Activated T-helper 1 cell treated with anti-CD3 and anti-CD28 coated beads, Interleukin-12 subunit alpha, Interleukin-12 subunit beta, Interleukin-2, Interleukin-4 antibody, amounts not matched to agents 30 ng/mL and 10 ng/mL and 1 ng/mL, durations not matched to agents 14 hours and 24 hours and 36 hours (primary cell): ENCODE measurements at regions of chr10 and their contacts with region 1.

Region 1: DNA sequence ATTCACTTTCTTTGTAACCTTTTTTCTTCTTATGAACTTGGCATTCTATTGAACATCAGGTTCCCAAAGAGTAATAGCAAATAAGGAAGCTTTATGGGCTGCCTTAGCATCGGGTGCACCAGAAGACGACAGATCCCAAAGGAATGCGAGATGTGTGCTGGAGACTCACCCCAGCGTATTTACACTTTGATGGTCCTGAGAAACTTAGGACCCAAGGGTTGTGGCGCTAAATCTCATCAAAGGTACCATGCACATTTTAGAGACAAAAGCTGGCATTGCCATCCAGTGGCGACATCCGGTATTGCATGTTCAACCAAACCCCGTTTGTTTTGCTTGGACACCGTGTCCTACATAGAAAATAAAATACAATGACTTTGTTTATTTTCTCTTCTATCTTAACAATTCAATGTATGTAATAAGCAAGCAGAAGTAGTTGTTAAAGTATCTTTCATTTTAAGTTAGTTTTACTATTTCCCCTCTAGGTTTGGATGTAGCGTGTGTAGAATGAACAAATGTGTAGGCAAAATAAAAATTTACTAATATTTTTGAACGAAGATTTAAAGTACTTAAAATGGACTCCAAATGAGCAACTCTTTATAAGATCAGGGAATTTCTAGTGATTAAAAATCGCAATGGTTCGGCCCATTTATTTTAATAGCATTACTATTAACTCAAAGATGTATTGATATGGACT is 1154.8 kb downstream of the GATA3 start:
- DNase-seq: peak; percentile 48
- H3K4me3 Mint-ChIP-seq: no peak overlapping the region
- H3K27ac Mint-ChIP-seq: no peak overlapping the region
- H3K4me1 Mint-ChIP-seq: no peaks in the 10 kb centered on the region
- H3K27me3 Mint-ChIP-seq: peaks cover 17% of the 10 kb centered on the region

Region 2: DNA sequence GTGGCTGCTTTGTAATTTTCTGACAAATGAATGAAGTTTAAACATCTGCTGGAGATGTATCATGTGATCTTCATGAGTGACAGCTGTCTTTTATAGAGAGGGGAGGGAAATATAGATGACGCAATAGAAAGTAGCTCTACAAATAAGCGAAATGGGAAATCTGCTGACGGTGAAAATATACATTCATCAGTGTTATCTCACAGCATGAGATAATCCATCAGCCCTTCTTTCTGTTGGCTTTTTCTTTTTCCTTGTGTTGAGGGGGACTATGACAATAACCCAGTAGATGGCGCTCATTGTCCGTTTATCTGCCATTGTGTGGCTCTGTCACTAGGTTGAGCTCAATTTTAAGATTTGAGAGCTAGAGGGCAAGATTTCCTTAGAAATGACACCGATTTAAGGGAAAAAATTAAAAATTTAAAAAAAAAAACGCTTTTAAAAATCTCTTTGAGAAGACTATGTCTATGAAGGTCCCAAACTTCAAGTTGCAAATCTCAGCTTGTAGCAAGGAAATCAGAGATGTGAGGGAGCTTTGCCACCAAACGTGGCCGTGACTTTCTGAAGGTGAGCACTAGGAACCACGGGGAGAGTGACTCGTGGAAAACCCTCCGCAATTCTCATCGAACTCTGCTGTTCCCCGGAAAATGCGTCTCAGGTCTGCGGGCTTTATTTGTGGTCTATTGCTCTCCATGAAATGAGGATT is 1683.8 kb before region 1 on chr10:
- intact Hi-C with region 1: loop called (anchors 10 kb)
- DNase-seq: peak; percentile 56
- H3K4me3 Mint-ChIP-seq: no peak overlapping the region
- H3K27ac Mint-ChIP-seq: peak overlapping the region; percentile 6
- H3K4me1 Mint-ChIP-seq: peaks cover 15% of the 10 kb centered on the region
- H3K27me3 Mint-ChIP-seq: peaks cover 13% of the 10 kb centered on the region

Region 3: GRCh38 chr10:7818295-7819122 is 1390.7 kb before region 1 on chr10 and contains the start of gene TAF3:
- intact Hi-C with region 1: loop called (anchors 2 kb)
- DNase-seq: peak; percentile 92
- H3K4me3 Mint-ChIP-seq: peak within 1 kb of the TSS; percentile 97
- H3K27ac Mint-ChIP-seq: peak within 1 kb of the TSS; percentile 91
- H3K4me1 Mint-ChIP-seq: peaks cover 21% of the 10 kb centered on the region
- H3K27me3 Mint-ChIP-seq: peaks cover 20% of the 10 kb centered on the region
- total RNA-seq, gene TAF3: 15.1 and 16.3 TPM in 2 replicates

Region 4: DNA sequence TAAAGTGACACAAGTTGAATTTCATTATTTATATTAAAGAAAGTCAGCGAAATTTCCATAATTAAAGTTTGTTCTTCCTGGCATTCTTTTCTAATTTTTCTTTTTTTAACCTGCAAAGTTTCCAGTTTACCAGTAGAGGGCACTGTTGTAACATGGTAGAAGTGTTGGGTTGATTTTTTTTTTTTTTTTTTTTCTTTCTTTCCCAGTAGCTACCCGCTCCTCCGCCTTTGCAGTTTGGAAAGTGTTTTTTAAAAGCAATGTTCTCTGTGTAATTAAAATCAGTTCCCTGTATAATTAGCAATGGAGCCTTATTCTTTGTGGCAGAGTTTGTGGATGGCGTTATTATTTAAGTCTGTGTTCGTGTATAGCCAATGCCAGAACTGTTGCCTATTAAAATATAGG is 1337.2 kb before region 1 on chr10:
- intact Hi-C with region 1: loop called (anchors 1 kb)
- DNase-seq: no peak
- H3K4me3 Mint-ChIP-seq: peak overlapping the region; percentile 53
- H3K27ac Mint-ChIP-seq: no peak overlapping the region
- H3K4me1 Mint-ChIP-seq: no peaks in the 10 kb centered on the region
- H3K27me3 Mint-ChIP-seq: peaks cover 4% of the 10 kb centered on the region

Region 5: DNA sequence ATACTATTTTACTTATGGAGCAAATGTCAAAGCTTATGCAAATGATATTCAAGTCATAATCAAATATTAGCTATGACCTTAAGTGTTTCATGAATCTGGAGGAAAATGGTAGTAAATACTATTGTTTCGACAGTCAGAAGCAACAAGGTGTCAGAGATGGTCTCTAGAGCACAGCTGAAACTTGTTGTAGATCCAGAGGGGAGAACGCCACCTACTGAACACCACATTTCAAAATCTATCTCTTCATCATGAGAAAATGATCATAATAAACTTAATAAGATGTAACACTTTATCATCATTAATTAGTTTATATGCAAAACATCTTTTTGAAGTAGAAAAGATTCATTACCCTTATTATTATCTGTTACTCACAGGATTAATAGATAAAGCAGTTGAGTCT is 736.0 kb before region 1 on chr10:
- intact Hi-C with region 1: loop called (anchors 10 kb)
- DNase-seq: peak; percentile 5
- H3K4me3 Mint-ChIP-seq: no peak overlapping the region
- H3K27ac Mint-ChIP-seq: no peak overlapping the region
- H3K4me1 Mint-ChIP-seq: peaks cover 8% of the 10 kb centered on the region
- H3K27me3 Mint-ChIP-seq: peaks cover 33% of the 10 kb centered on the region

Region 6: DNA sequence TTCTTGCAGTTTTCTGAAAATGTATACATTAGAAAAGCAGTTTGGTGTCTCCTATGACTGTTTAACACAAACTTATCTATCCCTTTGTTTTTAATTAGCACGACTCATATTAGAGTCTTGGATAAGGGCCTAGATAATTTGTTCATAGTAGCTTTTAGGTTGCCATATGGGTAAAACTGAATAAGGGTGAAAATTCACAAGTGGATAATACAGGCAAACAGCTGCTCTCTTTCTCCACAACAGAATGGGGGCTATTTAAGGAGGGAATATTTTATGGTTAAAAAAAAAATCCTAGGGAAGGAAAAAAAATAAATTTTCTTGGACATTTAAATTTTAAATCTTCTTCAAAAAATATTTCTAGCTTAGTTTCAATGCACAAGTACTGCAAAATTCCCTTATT is 261.3 kb after region 1 on chr10:
- intact Hi-C with region 1: no loop called
- DNase-seq: no peak
- H3K4me3 Mint-ChIP-seq: no peak overlapping the region
- H3K27ac Mint-ChIP-seq: no peak overlapping the region
- H3K4me1 Mint-ChIP-seq: no peaks in the 10 kb centered on the region
- H3K27me3 Mint-ChIP-seq: no peaks in the 10 kb centered on the region